ENCODE measurements at regions of chr12 and their contacts with region 1.

Region 1: GRCh38 chr12:64088431-64089349 is 133.4 kb downstream of the KICS2 start:
- DNase-seq: peak; percentile 80 to 81
- H3K4me3 ChIP-seq: no peak overlapping the region
- H3K27ac ChIP-seq: peak overlapping the region; percentile 93 to 95 (median 95)
- H3K4me1 ChIP-seq: peaks cover 19 to 31% of the 10 kb centered on the region in 2 donors
- H3K27me3 ChIP-seq: no peaks in the 10 kb centered on the region
- CTCF ChIP-seq: no peak
- POLR2A ChIP-seq: peak in 1 of 2 donors; percentile 47

Region 2: DNA sequence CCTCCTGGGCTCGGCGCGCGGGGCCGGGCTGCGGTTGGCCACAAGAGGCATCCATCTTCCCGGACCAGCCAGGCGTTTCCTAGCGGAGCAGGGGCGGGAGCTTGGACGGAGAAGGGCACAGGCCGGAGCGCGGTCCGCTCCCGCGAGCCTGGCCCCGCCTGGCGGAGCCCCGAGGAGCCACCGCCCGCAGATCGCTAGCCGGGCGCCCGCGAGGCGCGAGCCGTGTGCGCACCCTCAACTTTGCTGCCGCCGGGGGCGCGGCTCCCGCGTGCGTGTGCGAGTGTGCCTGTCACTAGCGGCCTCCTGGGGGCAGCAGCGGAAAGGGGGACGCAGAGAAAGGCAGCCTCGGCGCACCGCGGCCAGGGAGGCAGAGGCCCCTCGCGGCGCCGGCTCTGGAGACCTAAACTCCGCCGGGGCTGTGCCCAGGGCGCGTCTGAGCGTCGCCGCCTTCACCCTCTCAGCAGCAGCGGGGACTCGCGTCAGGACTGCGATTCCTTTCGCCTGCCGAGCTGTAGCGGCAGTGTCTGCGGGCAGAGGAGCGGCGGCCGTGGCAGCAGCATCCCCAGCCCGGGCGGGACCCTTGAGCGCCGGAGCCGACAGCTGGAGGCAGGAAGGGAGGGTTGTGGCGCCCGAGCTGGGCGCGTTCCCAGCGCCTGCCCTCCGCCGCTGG is 244.8 kb before region 1 on chr12:
- intact Hi-C with region 1: loop called (anchors 10 kb)
- DNase-seq: peak; percentile 90 to 93
- H3K4me3 ChIP-seq: peak overlapping the region; percentile 70 to 84 (median 71)
- H3K27ac ChIP-seq: peak overlapping the region; percentile 89 to 98 (median 92)
- H3K4me1 ChIP-seq: peaks cover 8 to 20% of the 10 kb centered on the region in 2 donors
- H3K27me3 ChIP-seq: no peaks in the 10 kb centered on the region
- CTCF ChIP-seq: peak; percentile 62 to 99 (median 94)
- POLR2A ChIP-seq: peak; percentile 33 to 74

Measured in thyroid gland (tissue), 4 donors.